Breast epithelium (tissue), 4 donors: ENCODE measurements at regions of chr1 and their contacts with region 1.

Region 1: GRCh38 chr1:218752126-218752525 is 407.0 kb downstream of the TGFB2 start:
- DNase-seq: no peak
- H3K4me3 ChIP-seq: no peak overlapping the region
- H3K27ac ChIP-seq: no peak overlapping the region
- H3K4me1 ChIP-seq: no peaks in the 10 kb centered on the region
- H3K27me3 ChIP-seq: no peaks in the 10 kb centered on the region
- CTCF ChIP-seq: no peak
- POLR2A ChIP-seq: no peak

Region 2: GRCh38 chr1:218728898-218729565 is 23.1 kb before region 1 on chr1:
- intact Hi-C with region 1: no loop called
- DNase-seq: no peak
- H3K4me3 ChIP-seq: no peak overlapping the region
- H3K27ac ChIP-seq: no peak overlapping the region
- H3K4me1 ChIP-seq: no peaks in the 10 kb centered on the region
- H3K27me3 ChIP-seq: no peaks in the 10 kb centered on the region
- CTCF ChIP-seq: no peak
- POLR2A ChIP-seq: no peak

Region 3: DNA sequence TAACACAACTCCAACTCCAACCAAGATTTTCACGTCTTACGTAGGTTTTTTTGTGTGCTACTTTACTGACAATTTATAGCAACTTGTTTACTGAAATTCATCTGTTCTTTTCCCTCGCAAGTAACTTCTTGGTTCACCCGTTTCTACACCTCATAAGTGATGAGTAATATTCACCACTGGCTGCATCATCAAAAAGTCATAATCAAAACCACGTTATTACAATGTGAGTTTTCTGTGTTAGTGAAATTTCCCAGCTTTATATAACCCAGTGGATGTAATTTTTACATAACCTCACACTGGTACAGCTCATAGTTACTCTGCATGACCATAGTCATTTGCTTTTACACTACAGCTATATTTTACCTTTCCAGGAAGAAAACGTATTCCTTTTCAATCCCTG is 20.4 kb after region 1 on chr1:
- intact Hi-C with region 1: loop called (anchors 1 kb)
- DNase-seq: no peak
- H3K4me3 ChIP-seq: no peak overlapping the region
- H3K27ac ChIP-seq: no peak overlapping the region
- H3K4me1 ChIP-seq: no peaks in the 10 kb centered on the region
- H3K27me3 ChIP-seq: no peaks in the 10 kb centered on the region
- CTCF ChIP-seq: no peak
- POLR2A ChIP-seq: no peak